ENCODE measurements at regions of chr6 and their contacts with region 1.

Region 1: GRCh38 chr6:158072083-158072721 is 90.5 kb downstream of the SYNJ2 start:
- DNase-seq: no peak
- ATAC-seq: peak; percentile 66

Region 2: DNA sequence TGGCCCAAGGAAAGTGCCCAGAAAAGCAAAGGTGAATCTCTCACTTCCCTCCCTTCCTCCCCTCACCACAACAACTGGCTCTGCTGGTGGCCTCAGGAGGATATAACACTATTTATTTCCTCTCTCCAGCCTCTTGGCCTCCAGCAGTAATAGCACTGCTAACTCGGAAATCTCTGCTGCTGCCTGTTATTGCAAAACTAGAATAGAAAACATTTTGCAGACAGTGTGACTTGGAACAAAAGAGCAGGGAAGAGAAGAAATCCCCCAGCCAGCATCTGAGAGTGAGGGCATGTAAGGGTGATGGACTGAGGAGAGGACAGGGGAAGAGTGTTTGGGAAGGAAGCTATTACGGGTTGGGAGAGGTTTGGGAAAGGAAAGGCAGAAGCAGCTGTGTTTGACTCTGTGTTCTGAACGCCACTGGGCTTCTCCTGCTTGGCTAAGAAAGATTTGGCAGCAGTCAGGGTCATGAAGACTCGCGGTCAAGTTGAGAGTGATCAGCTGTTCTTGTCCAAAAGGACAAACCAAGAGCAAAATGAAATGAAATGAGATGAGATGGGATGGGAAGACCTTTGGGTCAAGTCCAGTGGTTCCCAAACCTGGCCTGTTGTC is 330.1 kb before region 1 on chr6:
- intact Hi-C with region 1: no loop called
- DNase-seq: no peak
- ATAC-seq: peak; percentile 93

Region 3: GRCh38 chr6:157813757-157814455 is 258.3 kb before region 1 on chr6:
- intact Hi-C with region 1: no loop called
- DNase-seq: no peak
- ATAC-seq: peak; percentile 83

Region 4: GRCh38 chr6:157912326-157912725 is 159.9 kb before region 1 on chr6:
- intact Hi-C with region 1: loop called (anchors 10 kb)
- DNase-seq: no peak
- ATAC-seq: no peak

Region 5: GRCh38 chr6:158143700-158144099 is 71.5 kb after region 1 on chr6:
- intact Hi-C with region 1: no loop called
- DNase-seq: no peak
- ATAC-seq: no peak

Measured in Right ventricle myocardium inferior (tissue), 1 donor.